Naive thymus-derived CD4-positive, alpha-beta T cell (primary cell): ENCODE measurements at regions of chr1 and their contacts with region 1.

Region 1: GRCh38 chr1:41868599-41868998 is 50.1 kb downstream of the HIVEP3 start:
- DNase-seq: peak in 1 of 9 donors; percentile 50
- ATAC-seq: peak; percentile 70
- H3K4me3 ChIP-seq: no peak overlapping the region
- H3K4me3 Mint-ChIP-seq: peak overlapping the region in 1 of 10 donors; percentile 44
- H3K27ac ChIP-seq: no peak overlapping the region
- H3K27ac Mint-ChIP-seq: peak overlapping the region in 1 of 9 donors; percentile 5
- H3K4me1 ChIP-seq: peaks cover 0 to 4% of the 10 kb centered on the region in 2 donors
- H3K4me1 Mint-ChIP-seq: peaks cover 4 to 23% (median 7%) of the 10 kb centered on the region in 7 donors
- H3K27me3 ChIP-seq: no peaks in the 10 kb centered on the region
- H3K27me3 Mint-ChIP-seq: no peaks in the 10 kb centered on the region

Region 2: GRCh38 chr1:41516168-41517061 is 352.2 kb before region 1 on chr1:
- CTCF ChIA-PET with region 1: no interaction called
- POLR2A ChIA-PET with region 1: no interaction called
- intact Hi-C with region 1: loop called in 1 of 2 experiments (anchors 10 kb)
- DNase-seq: peak in 8 of 9 donors; percentile 6 to 76 (median 42)
- ATAC-seq: peak; percentile 94
- H3K4me3 ChIP-seq: no peak overlapping the region
- H3K4me3 Mint-ChIP-seq: peak overlapping the region in 7 of 10 donors; percentile 47 to 76 (median 58)
- H3K27ac ChIP-seq: no peak overlapping the region
- H3K27ac Mint-ChIP-seq: no peak overlapping the region
- H3K4me1 ChIP-seq: no peaks in the 10 kb centered on the region
- H3K4me1 Mint-ChIP-seq: peaks cover 0 to 13% (median 7%) of the 10 kb centered on the region in 7 donors
- H3K27me3 ChIP-seq: no peaks in the 10 kb centered on the region
- H3K27me3 Mint-ChIP-seq: no peaks in the 10 kb centered on the region

Region 3: DNA sequence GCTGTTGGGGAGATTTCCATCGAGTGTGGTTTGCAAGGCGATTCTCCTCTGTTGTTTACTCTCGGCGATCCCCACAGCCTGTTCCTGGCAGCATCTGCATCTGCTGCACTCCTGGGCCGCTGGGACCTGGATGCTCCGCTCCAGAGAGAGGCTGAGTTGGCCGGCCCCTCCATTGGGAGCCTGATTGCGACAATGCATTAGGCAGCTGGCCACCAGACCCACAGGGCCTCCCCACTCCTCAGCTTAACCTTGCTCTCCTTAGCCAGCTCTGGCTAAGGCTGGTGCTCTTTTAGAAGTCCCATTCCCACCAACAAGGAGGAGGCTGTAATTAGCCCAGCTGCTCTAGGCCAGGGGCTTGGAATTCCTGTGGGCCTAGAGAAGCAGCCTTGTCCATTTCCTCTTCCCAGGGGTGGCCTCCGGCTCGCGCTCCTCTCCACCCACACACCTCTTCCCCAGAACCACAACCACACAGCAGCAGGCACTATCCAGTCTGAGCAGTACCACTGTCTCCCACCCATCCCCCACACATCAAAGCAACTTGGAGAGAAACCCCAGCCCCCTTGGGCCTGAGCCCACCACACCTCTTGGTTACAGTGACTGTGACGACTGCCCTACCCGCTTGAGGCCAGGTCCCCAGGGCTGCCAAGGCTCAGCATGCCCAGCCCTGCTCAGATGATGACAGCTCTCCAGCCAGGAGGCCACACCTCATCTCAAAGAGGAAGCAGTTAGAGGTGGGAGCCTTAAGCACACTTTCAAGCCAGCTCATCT is 190.3 kb before region 1 on chr1:
- CTCF ChIA-PET with region 1: no interaction called
- POLR2A ChIA-PET with region 1: no interaction called
- intact Hi-C with region 1: loop called in 1 of 2 experiments (anchors 5 kb)
- DNase-seq: no peak
- ATAC-seq: peak; percentile 46
- H3K4me3 ChIP-seq: no peak overlapping the region
- H3K4me3 Mint-ChIP-seq: peak overlapping the region in 2 of 10 donors; percentile 43 to 76
- H3K27ac ChIP-seq: no peak overlapping the region
- H3K27ac Mint-ChIP-seq: peak overlapping the region in 1 of 9 donors; percentile 90
- H3K4me1 ChIP-seq: peaks cover 40 to 49% of the 10 kb centered on the region in 2 donors
- H3K4me1 Mint-ChIP-seq: peaks cover 30 to 92% (median 58%) of the 10 kb centered on the region in 7 donors
- H3K27me3 ChIP-seq: no peaks in the 10 kb centered on the region
- H3K27me3 Mint-ChIP-seq: no peaks in the 10 kb centered on the region

Region 4: GRCh38 chr1:41812051-41812450 is 56.5 kb before region 1 on chr1:
- CTCF ChIA-PET with region 1: no interaction called
- POLR2A ChIA-PET with region 1: no interaction called
- intact Hi-C with region 1: loop called in 1 of 2 experiments (anchors 10 kb)
- DNase-seq: peak in 6 of 9 donors; percentile 23 to 63 (median 47)
- ATAC-seq: peak; percentile 77
- H3K4me3 ChIP-seq: no peak overlapping the region
- H3K4me3 Mint-ChIP-seq: peak overlapping the region in 1 of 10 donors; percentile 29
- H3K27ac ChIP-seq: no peak overlapping the region
- H3K27ac Mint-ChIP-seq: peak overlapping the region in 2 of 9 donors; percentile 21 to 66
- H3K4me1 ChIP-seq: peaks cover 5 to 28% of the 10 kb centered on the region in 2 donors
- H3K4me1 Mint-ChIP-seq: peaks cover 17 to 48% (median 26%) of the 10 kb centered on the region in 7 donors
- H3K27me3 ChIP-seq: no peaks in the 10 kb centered on the region
- H3K27me3 Mint-ChIP-seq: no peaks in the 10 kb centered on the region

Region 5: DNA sequence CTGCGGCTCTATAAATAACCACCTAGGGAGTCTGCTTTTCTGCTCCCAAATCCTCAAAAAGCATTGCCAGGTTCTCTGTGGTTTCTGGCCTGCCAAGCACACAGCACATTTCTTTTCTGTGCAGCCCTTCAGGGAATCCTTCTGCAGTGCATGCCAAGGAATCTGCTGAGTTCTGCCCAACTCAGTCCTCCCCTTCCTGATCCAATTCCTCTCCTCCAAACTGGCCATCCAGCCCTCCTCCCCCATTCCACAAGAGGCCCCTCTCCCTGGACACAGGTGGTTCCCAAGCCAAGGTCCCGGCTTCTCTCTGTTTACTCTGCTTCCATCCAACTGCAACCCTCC is 11.7 kb before region 1 on chr1:
- CTCF ChIA-PET with region 1: no interaction called
- POLR2A ChIA-PET with region 1: no interaction called
- intact Hi-C with region 1: no loop called
- DNase-seq: no peak
- ATAC-seq: no peak
- H3K4me3 ChIP-seq: no peak overlapping the region
- H3K4me3 Mint-ChIP-seq: no peak overlapping the region
- H3K27ac ChIP-seq: no peak overlapping the region
- H3K27ac Mint-ChIP-seq: no peak overlapping the region
- H3K4me1 ChIP-seq: no peaks in the 10 kb centered on the region
- H3K4me1 Mint-ChIP-seq: peaks cover 0 to 14% (median 5%) of the 10 kb centered on the region in 7 donors
- H3K27me3 ChIP-seq: no peaks in the 10 kb centered on the region
- H3K27me3 Mint-ChIP-seq: no peaks in the 10 kb centered on the region

Region 6: GRCh38 chr1:42816585-42817434 is 948.2 kb after region 1 on chr1 and contains the starts of genes ERMAP and SVBP:
- CTCF ChIA-PET with region 1: no interaction called
- POLR2A ChIA-PET with region 1: no interaction called
- intact Hi-C with region 1: no loop called
- DNase-seq: peak; percentile 86 to 98 (median 91)
- ATAC-seq: peak; percentile 97
- H3K4me3 ChIP-seq: peak within 1 kb of the TSS; percentile 69
- H3K4me3 Mint-ChIP-seq: peak within 1 kb of the TSS; percentile 76 to 90 (median 84)
- H3K27ac ChIP-seq: peak within 1 kb of the TSS; percentile 89
- H3K27ac Mint-ChIP-seq: peak within 1 kb of the TSS; percentile 64 to 94 (median 86)
- H3K4me1 ChIP-seq: peaks cover 6 to 10% of the 10 kb centered on the region in 2 donors
- H3K4me1 Mint-ChIP-seq: peaks cover 19 to 35% (median 29%) of the 10 kb centered on the region in 7 donors
- H3K27me3 ChIP-seq: no peaks in the 10 kb centered on the region
- H3K27me3 Mint-ChIP-seq: peaks cover 0 to 10% (median 0%) of the 10 kb centered on the region in 5 donors
- total RNA-seq, gene ERMAP: 6.1 to 10.3 (median 6.7) TPM
- total RNA-seq, gene SVBP: 12.7 to 22.2 (median 17.8) TPM